ENCODE measurements at regions of chr18 and their contacts with region 1.

Region 1: DNA sequence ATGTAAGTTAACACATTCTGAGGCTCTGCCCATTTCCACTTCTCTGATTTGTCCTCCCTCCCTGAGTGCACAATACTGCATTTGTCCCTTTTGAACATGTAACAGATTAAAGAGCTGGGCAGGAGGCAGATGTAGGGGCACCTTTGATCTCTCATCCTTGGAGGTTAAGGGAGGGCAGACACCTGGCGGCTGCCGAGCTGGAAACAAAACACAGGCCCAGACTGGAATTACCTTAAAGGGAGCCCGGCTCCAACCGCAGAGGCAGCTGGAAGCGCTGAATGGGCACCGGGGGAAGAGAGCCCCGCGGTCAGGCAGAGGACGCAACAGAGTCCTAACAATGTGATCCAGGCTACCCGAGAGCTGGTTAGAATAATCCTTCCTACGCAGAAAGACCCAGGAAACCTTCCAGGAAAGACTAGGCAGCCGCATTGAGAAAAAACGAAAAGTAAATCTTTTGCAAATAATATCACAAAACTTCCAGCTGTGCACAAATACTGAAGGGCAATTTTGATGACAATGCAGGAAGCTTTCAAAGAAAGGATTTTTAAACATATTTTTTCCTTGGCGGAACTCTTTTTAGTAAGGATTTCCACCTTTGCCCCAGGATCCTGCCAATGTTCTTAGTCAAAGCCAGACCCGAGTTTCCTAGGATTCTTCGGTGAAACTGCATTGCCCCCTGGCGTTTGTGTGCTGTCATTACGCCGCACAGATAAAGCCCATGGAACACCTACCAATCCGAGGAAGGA is 216.0 kb downstream of the TGIF1 start:
- DNase-seq: peak; percentile 76
- ATAC-seq: peak; percentile 78
- H3K4me3 Mint-ChIP-seq: peak overlapping the region; percentile 16
- H3K27ac Mint-ChIP-seq: no peak overlapping the region
- H3K4me1 Mint-ChIP-seq: peaks cover 21% of the 10 kb centered on the region
- H3K27me3 Mint-ChIP-seq: peaks cover 3% of the 10 kb centered on the region

Region 2: DNA sequence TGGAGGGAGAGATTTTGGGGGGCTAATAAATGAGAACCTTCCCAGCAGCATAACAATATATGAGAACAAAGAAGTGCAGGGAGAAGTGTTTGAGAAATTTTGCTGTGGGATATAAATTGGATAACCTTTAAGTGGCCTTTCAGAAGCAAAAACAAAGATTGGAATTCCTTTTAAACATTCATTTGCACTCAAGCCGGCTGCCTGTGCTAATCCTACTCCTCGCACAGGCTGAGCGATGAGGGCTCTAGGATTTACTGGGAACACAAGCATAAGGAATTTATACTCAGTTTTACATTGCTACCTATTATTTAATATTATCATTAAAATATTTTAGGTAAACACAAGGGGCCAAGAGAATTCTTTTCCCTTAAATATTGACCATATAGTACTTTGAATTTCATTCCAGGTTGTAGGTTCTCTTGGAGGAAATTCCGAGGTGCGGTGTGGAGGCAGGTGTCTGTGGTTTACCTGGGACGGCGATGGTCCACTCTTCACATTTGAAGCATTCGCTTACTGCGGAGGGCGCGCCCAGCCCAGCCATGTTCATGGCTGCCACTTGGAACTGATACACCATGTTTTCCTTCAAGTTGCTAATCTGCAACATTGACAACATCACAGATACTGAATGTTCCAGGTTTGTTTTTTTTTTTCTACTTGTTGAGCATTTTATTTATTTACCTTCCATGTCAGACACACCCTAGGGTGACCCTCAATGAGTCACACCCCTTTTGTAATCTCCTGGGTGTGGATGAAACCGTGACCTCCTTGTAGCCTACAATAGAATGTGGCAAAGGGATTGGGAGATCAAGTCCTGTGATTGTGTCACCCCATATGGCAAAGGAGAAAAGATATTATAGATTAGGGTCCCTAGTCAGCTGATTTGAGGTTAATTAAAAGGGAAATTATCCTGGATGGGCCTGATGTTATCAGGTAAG is 546.3 kb before region 1 on chr18:
- CTCF ChIA-PET with region 1: no interaction called
- DNase-seq: no peak
- ATAC-seq: no peak
- H3K4me3 Mint-ChIP-seq: no peak overlapping the region
- H3K27ac Mint-ChIP-seq: no peak overlapping the region
- H3K4me1 Mint-ChIP-seq: no peaks in the 10 kb centered on the region
- H3K27me3 Mint-ChIP-seq: no peaks in the 10 kb centered on the region

Region 3: GRCh38 chr18:3281456-3282400 is 384.2 kb before region 1 on chr18:
- CTCF ChIA-PET with region 1: interaction called, 37 read pairs
- DNase-seq: no peak
- ATAC-seq: peak; percentile 87
- H3K4me3 Mint-ChIP-seq: no peak overlapping the region
- H3K27ac Mint-ChIP-seq: no peak overlapping the region
- H3K4me1 Mint-ChIP-seq: no peaks in the 10 kb centered on the region
- H3K27me3 Mint-ChIP-seq: peaks cover 2% of the 10 kb centered on the region

Region 4: GRCh38 chr18:3447895-3448837 is 217.8 kb before region 1 on chr18:
- CTCF ChIA-PET with region 1: interaction called, 50 read pairs
- DNase-seq: peak; percentile 91
- ATAC-seq: peak; percentile 68
- H3K4me3 Mint-ChIP-seq: peak overlapping the region; percentile 87
- H3K27ac Mint-ChIP-seq: peak overlapping the region; percentile 97
- H3K4me1 Mint-ChIP-seq: peaks cover 31% of the 10 kb centered on the region
- H3K27me3 Mint-ChIP-seq: no peaks in the 10 kb centered on the region

Region 5: GRCh38 chr18:3585656-3586509 is 80.1 kb before region 1 on chr18:
- CTCF ChIA-PET with region 1: interaction called, 46 read pairs
- DNase-seq: peak; percentile 82
- ATAC-seq: peak; percentile 92
- H3K4me3 Mint-ChIP-seq: no peak overlapping the region
- H3K27ac Mint-ChIP-seq: no peak overlapping the region
- H3K4me1 Mint-ChIP-seq: peaks cover 25% of the 10 kb centered on the region
- H3K27me3 Mint-ChIP-seq: no peaks in the 10 kb centered on the region

Region 6: DNA sequence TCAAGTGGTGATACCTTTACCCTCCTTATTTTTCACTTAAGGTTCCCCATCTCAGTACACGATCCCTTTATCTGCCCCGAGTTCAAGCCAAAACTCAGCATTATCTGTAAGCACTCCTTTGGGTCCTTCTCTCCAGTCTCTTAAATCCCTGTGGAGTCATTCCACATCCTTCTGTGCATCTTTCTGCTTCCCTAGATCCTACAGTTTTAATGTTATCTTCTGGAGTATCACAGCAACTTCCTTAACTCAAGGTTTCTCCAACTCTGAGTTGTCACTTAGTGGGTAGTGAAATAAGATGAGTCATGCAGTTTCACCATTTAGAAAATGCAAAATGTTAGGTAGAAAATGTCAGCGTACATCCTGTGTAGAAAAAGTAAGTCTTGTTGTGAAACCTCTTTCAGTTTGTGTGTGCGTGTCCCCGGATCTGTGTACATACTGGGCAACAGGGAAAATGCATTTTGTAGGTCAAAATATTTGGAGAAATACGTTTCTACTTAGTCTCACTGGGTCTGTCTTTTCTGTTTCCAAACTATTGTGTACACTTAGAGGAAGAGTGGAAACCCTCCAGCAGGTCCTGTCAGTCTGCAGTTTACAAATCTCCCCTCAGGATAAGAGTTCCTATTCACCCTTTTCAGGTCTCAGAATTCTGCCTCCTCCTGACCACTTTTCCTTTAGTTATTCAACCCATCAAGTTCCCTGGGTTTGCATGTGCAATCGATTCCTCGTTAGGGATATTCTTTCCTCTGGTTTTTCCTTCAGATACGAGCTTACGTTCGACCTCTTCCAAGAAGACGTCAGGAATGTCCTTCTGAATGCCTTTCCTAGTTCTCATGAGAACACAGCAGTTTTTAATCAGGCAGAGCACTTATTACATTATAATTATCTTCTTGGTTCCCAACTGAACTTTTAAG is 61.2 kb before region 1 on chr18:
- CTCF ChIA-PET with region 1: interaction called, 22 read pairs
- DNase-seq: peak; percentile 64
- ATAC-seq: peak; percentile 75
- H3K4me3 Mint-ChIP-seq: no peak overlapping the region
- H3K27ac Mint-ChIP-seq: no peak overlapping the region
- H3K4me1 Mint-ChIP-seq: peaks cover 13% of the 10 kb centered on the region
- H3K27me3 Mint-ChIP-seq: no peaks in the 10 kb centered on the region

Region 7: DNA sequence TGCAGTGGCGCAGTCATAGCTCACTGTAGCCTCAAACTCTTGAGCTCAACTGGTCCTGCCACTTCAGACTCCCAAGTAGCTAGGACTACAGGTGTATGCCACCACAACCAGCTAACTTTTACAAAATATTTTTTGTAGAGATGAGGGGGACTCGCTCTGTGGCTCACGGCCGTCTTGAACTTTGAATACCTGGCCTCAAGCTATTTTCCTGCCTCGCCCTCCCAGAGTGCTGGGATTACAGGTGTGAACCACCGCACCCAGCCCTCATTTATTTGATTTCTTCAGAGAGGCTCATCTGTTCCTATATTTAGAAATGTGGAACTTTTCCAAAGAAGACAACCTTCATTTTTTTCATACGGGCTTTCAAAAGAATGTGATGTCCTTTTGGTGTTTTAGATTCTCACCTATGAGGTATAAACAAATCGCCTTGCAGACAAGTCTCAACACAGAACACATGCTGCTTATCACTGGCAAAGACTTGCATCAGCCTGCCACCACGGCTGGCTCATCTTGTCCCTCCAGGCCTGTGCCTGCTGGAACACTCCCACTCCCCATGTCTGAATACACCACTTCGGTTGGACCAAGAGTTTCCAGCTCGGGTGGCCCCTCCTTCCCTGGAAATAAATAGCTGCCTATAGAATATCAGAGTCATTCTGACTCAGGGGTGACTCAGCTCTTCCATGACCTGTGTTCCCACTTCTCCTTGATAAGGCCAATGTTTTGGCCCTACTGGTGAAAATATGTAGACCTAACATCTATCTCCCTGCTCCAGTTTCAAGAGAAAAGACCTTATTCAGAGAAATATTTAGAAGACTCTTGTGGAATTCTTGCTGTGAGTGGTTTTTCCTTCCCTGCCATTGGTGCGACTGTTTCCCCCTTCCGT is 13.3 kb before region 1 on chr18:
- CTCF ChIA-PET with region 1: interaction called, 14 read pairs
- DNase-seq: peak; percentile 49
- ATAC-seq: peak; percentile 39
- H3K4me3 Mint-ChIP-seq: no peak overlapping the region
- H3K27ac Mint-ChIP-seq: no peak overlapping the region
- H3K4me1 Mint-ChIP-seq: peaks cover 21% of the 10 kb centered on the region
- H3K27me3 Mint-ChIP-seq: no peaks in the 10 kb centered on the region

Region 8: GRCh38 chr18:3706279-3707097 is 40.5 kb after region 1 on chr18:
- CTCF ChIA-PET with region 1: no interaction called
- DNase-seq: no peak
- ATAC-seq: no peak
- H3K4me3 Mint-ChIP-seq: no peak overlapping the region
- H3K27ac Mint-ChIP-seq: no peak overlapping the region
- H3K4me1 Mint-ChIP-seq: no peaks in the 10 kb centered on the region
- H3K27me3 Mint-ChIP-seq: peaks cover 43% of the 10 kb centered on the region

Region 9: DNA sequence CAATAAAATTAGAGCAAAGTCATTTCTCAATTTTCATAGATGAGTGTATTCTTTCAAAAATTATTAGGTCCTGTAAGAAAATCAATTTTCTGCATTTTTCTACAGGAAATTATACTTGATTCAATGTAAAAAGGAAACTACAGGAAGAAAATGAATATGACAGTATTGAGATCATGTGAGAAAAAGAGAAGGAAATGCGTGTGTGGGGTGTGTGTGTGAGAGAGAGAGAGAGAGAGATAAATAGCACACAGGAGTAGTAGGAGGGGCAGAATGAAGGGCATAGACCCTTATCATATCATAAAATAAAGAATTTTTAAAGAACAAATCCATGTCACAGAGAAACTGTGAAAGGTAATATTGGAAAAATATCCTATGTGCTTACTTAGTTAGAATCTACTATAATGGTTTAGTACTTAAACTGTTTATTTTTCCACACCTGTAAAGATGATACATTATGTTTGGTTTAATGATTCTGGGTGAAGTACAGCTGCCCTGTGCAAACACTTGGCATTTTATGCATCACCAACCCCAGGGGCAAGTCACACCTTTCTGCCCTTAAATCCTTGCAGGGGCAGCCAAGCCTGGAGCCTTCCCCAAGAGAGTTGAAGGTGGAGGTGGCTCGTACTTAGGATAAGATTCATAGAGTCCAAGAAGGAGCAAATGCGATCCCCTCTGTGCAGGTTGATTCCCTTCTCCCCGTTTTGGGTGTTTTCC is 60.4 kb after region 1 on chr18:
- CTCF ChIA-PET with region 1: no interaction called
- DNase-seq: no peak
- ATAC-seq: no peak
- H3K4me3 Mint-ChIP-seq: no peak overlapping the region
- H3K27ac Mint-ChIP-seq: no peak overlapping the region
- H3K4me1 Mint-ChIP-seq: no peaks in the 10 kb centered on the region
- H3K27me3 Mint-ChIP-seq: peaks cover 18% of the 10 kb centered on the region

Measured in activated CD8-positive, alpha-beta memory T cell treated with anti-CD3 and anti-CD28 coated beads, Interleukin-2, amount 10 ng/mL, durations not matched to agents 7 days and 5 days (primary cell).